BJ (cell line): ENCODE measurements at regions of chr19 and their contacts with region 1.

Region 1: GRCh38 chr19:40662921-40663694 is 27.3 kb downstream of the NUMBL start:
- DNase-seq: no peak
- H3K4me3 ChIP-seq: peak overlapping the region; percentile 52
- H3K27me3 ChIP-seq: no peaks in the 10 kb centered on the region
- CTCF ChIP-seq: peak; percentile 91

Region 2: GRCh38 chr19:40523322-40524047 is 139.6 kb before region 1 on chr19:
- CTCF ChIA-PET with region 1: no interaction called
- POLR2A ChIA-PET with region 1: no interaction called
- DNase-seq: no peak
- H3K4me3 ChIP-seq: no peak overlapping the region
- H3K27me3 ChIP-seq: no peaks in the 10 kb centered on the region; the same call in 1 of the 2 replicates
- CTCF ChIP-seq: peak; percentile 70

Region 3: GRCh38 chr19:40674291-40674690 is 11.2 kb after region 1 on chr19:
- CTCF ChIA-PET with region 1: interaction called, 11 read pairs
- POLR2A ChIA-PET with region 1: no interaction called
- DNase-seq: no peak
- H3K4me3 ChIP-seq: no peak overlapping the region
- H3K27me3 ChIP-seq: no peaks in the 10 kb centered on the region
- CTCF ChIP-seq: no peak

Region 4: GRCh38 chr19:40754611-40755246 is 91.6 kb after region 1 on chr19:
- CTCF ChIA-PET with region 1: no interaction called
- POLR2A ChIA-PET with region 1: no interaction called
- DNase-seq: no peak
- H3K4me3 ChIP-seq: no peak overlapping the region
- H3K27me3 ChIP-seq: no peaks in the 10 kb centered on the region
- CTCF ChIP-seq: no peak

Region 5: GRCh38 chr19:40777937-40778705 is 115.0 kb after region 1 on chr19 and contains the start of gene RAB4B:
- CTCF ChIA-PET with region 1: interaction called, 14 read pairs
- POLR2A ChIA-PET with region 1: interaction called, 3 read pairs
- DNase-seq: peak; percentile 98
- H3K4me3 ChIP-seq: peak within 1 kb of the TSS; percentile 83
- H3K27me3 ChIP-seq: no peaks in the 10 kb centered on the region
- CTCF ChIP-seq: no peak
- polyA plus RNA-seq, gene RAB4B: 16.5 and 25.4 TPM in 2 replicates

Region 6: GRCh38 chr19:40813182-40813958 is 150.3 kb after region 1 on chr19:
- CTCF ChIA-PET with region 1: interaction called, 49 read pairs
- POLR2A ChIA-PET with region 1: no interaction called
- DNase-seq: no peak
- H3K4me3 ChIP-seq: no peak overlapping the region
- H3K27me3 ChIP-seq: no peaks in the 10 kb centered on the region
- CTCF ChIP-seq: no peak

Region 7: DNA sequence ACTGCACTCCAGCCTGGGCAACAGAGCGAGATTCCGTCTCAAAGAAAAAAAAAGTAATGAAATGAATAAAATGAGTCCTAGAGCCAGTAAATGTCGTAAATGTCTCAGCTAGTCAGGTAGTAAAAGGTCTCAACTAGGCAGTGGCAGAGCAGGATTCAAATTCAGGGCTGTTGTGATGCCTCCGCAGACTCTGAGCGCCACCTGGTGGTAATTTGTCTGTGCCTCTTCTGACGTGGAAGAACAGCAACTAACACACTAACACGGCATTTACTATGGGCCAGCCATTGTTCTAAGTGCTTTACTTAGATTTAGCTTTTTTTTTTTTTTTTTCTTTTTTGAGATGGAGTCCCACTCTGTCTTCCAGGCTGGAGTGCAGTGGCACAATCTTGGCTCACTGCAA is 481.3 kb after region 1 on chr19:
- CTCF ChIA-PET with region 1: interaction called, 25 read pairs
- POLR2A ChIA-PET with region 1: no interaction called
- DNase-seq: no peak
- H3K4me3 ChIP-seq: no peak overlapping the region
- H3K27me3 ChIP-seq: no peaks in the 10 kb centered on the region
- CTCF ChIP-seq: peak; percentile 82